PC-9 (cell line): ENCODE measurements at regions of chr3 and their contacts with region 1.

Region 1: DNA sequence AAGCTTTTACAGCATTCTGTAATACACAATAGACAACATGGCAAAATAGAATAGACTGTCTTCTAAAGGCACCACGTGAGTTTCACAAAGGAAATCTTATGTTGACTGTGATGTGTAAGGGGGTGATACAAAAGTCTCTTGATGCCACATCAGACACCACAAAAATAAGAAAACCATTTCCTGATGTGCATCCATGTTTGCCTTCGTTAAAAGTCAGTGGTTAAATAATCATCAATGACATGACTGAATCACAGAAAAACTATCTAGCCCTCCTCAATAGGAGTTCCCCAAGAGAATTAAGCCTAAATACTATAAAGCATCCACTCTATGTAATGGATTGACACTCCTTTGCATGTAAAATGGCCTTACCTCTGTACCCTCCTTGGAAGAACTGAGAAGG is 198.6 kb upstream of the SLC2A2 start:
- DNase-seq: no peak
- H3K4me3 ChIP-seq: no peak overlapping the region
- H3K27ac ChIP-seq: no peak overlapping the region
- H3K4me1 ChIP-seq: no peaks in the 10 kb centered on the region
- H3K27me3 ChIP-seq: no peaks in the 10 kb centered on the region
- CTCF ChIP-seq: no peak

Region 2: DNA sequence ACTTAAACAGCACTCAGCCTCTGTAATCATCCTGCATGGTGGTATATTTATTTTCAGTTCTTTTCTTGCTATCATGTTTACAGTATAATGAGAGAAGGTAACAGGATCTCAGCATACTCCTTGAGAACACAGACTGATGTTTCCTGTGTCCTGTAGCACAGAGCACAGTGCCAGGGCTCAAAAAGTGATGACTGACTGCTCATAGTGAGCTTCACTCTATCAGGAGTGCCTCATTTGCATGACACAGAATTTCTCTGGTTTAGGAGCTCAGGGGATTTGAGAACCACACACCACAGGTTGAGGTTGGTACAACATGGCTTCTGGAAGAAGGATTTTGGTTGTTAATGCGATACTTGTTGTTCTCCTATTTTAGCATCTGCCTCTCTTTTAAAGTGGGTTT is 130.1 kb before region 1 on chr3:
- CTCF ChIA-PET with region 1: no interaction called
- POLR2A ChIA-PET with region 1: no interaction called
- intact Hi-C with region 1: no loop called
- DNase-seq: no peak
- H3K4me3 ChIP-seq: no peak overlapping the region
- H3K27ac ChIP-seq: no peak overlapping the region
- H3K4me1 ChIP-seq: peaks cover 4% of the 10 kb centered on the region; the same call in 1 of the 2 replicates
- H3K27me3 ChIP-seq: no peaks in the 10 kb centered on the region
- CTCF ChIP-seq: no peak

Region 3: DNA sequence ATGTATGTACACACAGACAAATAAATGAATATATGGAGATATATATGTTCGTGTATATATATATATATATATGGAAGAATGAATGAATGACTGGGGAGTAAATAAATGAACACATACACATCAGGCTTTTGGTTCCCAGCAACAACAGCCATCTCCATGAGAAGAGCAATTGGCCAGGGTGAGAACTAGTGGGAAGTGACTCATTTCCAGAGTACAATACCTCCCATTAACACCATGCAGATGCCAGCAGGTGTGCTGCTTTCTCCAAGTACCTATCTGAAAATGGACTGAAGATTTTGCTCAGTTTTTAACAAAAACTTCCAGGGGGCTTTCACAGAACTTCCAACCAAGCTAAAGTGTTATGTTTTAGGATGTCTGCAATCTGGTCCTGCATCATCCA is 18.9 kb before region 1 on chr3:
- CTCF ChIA-PET with region 1: no interaction called
- POLR2A ChIA-PET with region 1: interaction called, 11 read pairs
- intact Hi-C with region 1: no loop called
- DNase-seq: no peak
- H3K4me3 ChIP-seq: no peak overlapping the region
- H3K27ac ChIP-seq: no peak overlapping the region
- H3K4me1 ChIP-seq: peaks cover 22% of the 10 kb centered on the region
- H3K27me3 ChIP-seq: no peaks in the 10 kb centered on the region
- CTCF ChIP-seq: no peak